Activated CD8-positive, alpha-beta T cell treated with anti-CD3 and anti-CD28 coated beads for 36 hours (primary cell): ENCODE measurements at regions of chr3 and their contacts with region 1.

Region 1: DNA sequence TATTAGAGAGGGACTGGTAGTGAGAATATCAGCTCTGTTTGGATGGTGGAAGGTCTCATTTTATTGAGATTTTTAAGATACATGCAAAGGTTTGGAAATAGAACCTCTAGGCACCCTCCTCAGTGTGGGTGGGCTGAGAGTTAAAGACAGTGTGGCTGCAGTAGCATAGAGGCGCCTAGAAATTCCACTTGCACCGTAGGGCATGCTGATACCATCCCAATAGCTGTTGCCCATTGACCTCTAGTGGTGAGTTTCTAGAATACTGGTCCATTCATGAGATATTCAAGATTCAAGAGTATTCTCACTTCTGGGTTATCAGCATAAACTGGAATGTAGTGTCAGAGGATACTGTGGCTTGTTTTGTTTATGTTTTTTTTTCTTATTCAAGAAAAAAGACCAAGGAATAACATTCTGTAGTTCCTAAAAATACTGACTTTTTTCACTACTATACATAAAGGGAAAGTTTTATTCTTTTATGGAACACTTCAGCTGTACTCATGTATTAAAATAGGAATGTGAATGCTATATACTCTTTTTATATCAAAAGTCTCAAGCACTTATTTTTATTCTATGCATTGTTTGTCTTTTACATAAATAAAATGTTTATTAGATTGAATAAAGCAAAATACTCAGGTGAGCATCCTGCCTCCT is 87.2 kb downstream of the TGFBR2 start:
- DNase-seq: peak; percentile 55
- ATAC-seq: peak; percentile 88
- H3K4me3 Mint-ChIP-seq: no peak overlapping the region
- H3K27ac Mint-ChIP-seq: peak overlapping the region; percentile 82
- H3K4me1 Mint-ChIP-seq: peaks cover 76% of the 10 kb centered on the region
- H3K27me3 Mint-ChIP-seq: no peaks in the 10 kb centered on the region
- CTCF ChIP-seq: peak; percentile 84

Region 2: GRCh38 chr3:30112902-30113484 is 580.6 kb before region 1 on chr3:
- CTCF ChIA-PET with region 1: interaction called, 6 read pairs
- POLR2A ChIA-PET with region 1: no interaction called
- intact Hi-C with region 1: loop called (anchors 2 kb)
- DNase-seq: no peak
- ATAC-seq: no peak
- H3K4me3 Mint-ChIP-seq: no peak overlapping the region
- H3K27ac Mint-ChIP-seq: no peak overlapping the region
- H3K4me1 Mint-ChIP-seq: peaks cover 3% of the 10 kb centered on the region
- H3K27me3 Mint-ChIP-seq: peaks cover 1% of the 10 kb centered on the region
- CTCF ChIP-seq: peak; percentile 46

Region 3: GRCh38 chr3:30611613-30612436 is 81.8 kb before region 1 on chr3:
- CTCF ChIA-PET with region 1: interaction called, 16 read pairs
- POLR2A ChIA-PET with region 1: interaction called, 5 read pairs
- intact Hi-C with region 1: no loop called
- DNase-seq: no peak
- ATAC-seq: peak; percentile 10
- H3K4me3 Mint-ChIP-seq: peak overlapping the region; percentile 88
- H3K27ac Mint-ChIP-seq: peak overlapping the region; percentile 96
- H3K4me1 Mint-ChIP-seq: peaks cover 55% of the 10 kb centered on the region
- H3K27me3 Mint-ChIP-seq: no peaks in the 10 kb centered on the region
- CTCF ChIP-seq: no peak

Region 4: DNA sequence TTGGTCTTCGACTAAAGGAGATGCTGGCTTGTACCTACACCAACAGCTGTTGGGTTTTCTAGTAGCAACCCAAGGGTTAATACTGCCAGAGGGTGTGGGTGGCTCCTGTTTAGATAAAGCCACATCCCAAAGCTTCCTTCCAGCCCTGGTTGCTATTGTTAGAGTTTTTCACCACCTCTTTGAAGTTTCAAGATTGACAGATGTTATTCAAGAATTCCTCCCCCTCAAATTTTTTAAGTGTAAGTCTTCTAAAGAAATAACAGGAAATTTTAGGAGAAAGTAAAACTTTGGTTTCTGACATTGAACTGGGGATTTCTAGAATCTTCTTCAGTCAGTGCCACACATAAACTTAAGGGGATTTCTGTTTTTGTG is 26.3 kb before region 1 on chr3:
- CTCF ChIA-PET with region 1: interaction called, 11 read pairs
- POLR2A ChIA-PET with region 1: interaction called, 3 read pairs
- intact Hi-C with region 1: no loop called
- DNase-seq: peak; percentile 71
- ATAC-seq: peak; percentile 66
- H3K4me3 Mint-ChIP-seq: peak overlapping the region; percentile 14
- H3K27ac Mint-ChIP-seq: peak overlapping the region; percentile 92
- H3K4me1 Mint-ChIP-seq: peaks cover 92% of the 10 kb centered on the region
- H3K27me3 Mint-ChIP-seq: no peaks in the 10 kb centered on the region
- CTCF ChIP-seq: no peak

Region 5: DNA sequence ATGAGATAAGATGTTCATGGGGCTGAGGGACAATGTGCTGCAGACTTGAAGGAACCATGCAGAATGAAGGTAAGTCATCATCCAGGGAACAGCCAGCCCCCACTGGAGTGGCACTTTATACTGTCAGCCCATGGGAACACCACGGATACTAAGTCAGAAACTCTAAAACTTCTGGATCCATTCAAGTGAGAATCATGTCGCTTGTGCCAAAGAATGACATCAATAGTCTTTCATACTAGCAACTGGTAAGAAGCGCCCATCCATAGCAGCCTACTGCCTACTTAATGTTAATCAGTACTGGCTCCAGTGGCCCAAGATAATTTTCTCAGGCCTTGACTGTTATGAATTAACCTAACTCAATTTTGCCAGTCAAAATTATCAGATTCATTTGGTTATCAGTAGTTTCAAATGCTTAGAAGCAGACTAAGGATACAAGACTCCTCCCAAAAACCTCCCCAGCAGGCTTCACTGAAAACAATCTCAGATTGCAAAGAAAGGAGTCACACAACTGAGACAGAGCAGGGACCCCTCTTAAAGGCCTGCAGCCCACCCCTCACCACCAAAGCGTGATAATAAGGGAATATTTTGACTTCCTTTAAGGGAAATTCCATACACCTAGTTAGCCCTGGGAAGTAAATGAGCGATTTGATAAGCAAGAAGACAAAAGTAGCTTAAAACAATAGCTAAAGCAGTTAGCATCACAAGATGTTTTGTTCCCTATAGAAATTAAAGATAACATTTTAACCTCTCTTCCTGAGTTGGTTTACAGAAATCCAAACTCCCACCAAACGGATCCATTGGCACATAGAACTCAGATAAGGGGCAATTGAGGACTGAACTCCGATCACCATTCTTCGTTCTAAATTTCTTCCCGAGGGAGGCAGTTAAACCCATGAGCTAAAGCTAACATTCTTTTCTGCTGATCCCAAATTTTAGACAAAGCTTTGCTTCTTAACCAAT is 11.6 kb after region 1 on chr3:
- CTCF ChIA-PET with region 1: interaction called, 23 read pairs
- POLR2A ChIA-PET with region 1: interaction called, 3 read pairs
- intact Hi-C with region 1: no loop called
- DNase-seq: no peak
- ATAC-seq: no peak
- H3K4me3 Mint-ChIP-seq: no peak overlapping the region
- H3K27ac Mint-ChIP-seq: no peak overlapping the region
- H3K4me1 Mint-ChIP-seq: peaks cover 20% of the 10 kb centered on the region
- H3K27me3 Mint-ChIP-seq: no peaks in the 10 kb centered on the region
- CTCF ChIP-seq: no peak

Region 6: DNA sequence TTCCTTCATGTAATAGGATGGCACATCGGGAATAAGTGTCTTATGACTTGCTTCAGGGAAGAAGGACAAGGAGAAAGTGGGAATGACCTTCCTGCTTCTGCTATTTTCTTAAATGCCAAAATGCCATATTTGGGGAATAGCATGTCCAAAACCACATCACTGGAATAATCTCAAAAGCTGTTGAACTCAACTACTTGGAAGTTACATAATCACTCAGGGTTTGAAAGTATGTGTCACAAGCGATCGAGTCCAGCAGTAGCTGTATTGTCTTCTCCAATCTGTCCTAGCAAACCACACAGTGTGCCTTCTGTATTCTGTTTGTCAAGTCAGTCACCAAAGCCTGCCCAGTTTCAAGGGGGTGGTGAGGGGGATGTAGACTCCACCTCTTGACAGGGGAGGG is 259.2 kb after region 1 on chr3:
- CTCF ChIA-PET with region 1: no interaction called
- POLR2A ChIA-PET with region 1: no interaction called
- intact Hi-C with region 1: no loop called
- DNase-seq: no peak
- ATAC-seq: no peak
- H3K4me3 Mint-ChIP-seq: no peak overlapping the region
- H3K27ac Mint-ChIP-seq: no peak overlapping the region
- H3K4me1 Mint-ChIP-seq: no peaks in the 10 kb centered on the region
- H3K27me3 Mint-ChIP-seq: no peaks in the 10 kb centered on the region
- CTCF ChIP-seq: no peak